ENCODE measurements at regions of chr2 and their contacts with region 1.

Region 1: DNA sequence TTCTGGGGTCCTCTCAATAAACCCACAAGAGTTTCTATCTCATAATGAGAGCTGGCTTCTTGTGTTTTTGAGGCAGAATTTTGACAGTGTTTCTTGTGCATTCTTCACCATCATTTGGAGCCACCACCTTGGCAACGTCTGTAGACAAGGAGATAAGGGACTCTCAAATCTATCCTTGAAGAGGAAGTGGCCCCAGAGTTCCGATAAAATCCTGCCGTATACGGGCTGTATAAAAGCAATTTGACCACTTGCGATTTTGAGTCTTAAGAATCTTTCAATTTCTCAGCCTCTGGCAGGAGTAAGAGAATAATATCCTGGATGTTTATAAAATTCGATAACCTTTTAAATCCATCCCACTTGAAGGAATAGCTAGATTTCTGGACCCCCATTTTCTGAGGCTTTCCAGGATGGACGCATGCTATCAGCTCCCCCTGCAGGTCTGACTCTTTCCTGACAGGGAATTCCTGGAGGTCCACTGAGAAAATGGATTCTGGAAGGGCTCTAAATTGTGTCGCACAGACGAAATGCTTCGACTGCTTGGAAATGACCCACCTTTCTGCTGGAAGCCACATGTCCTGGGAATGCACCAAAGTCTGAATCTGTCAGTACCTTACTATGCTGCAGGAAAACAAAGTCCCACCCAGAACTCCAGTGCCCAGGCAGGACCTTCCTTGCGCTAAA is 54.1 kb downstream of the E2F6 start:
- DNase-seq: peak; percentile 51 to 66 (median 57)
- ATAC-seq: peak; percentile 77
- H3K4me3 ChIP-seq: peak overlapping the region; percentile 5; the same call in 1 of the 2 replicates
- H3K27ac ChIP-seq: no peak overlapping the region
- H3K4me1 ChIP-seq: peaks cover 3 to 17% of the 10 kb centered on the region in 2 experiments; a peak in 4 of 5 replicates
- H3K27me3 ChIP-seq: no peaks in the 10 kb centered on the region
- CTCF ChIP-seq: peak; percentile 72 to 84 (median 79)
- EP300 ChIP-seq: 0 out of 2 replicates have a peak, but pooled peaks have one; percentile 25
- POLR2A ChIP-seq: no peak
- RAD21 ChIP-seq: peak; percentile 83 to 90

Region 2: GRCh38 chr2:11124503-11125068 is 287.3 kb before region 1 on chr2:
- CTCF ChIA-PET with region 1: no interaction called
- POLR2A ChIA-PET with region 1: no interaction called
- in situ Hi-C with region 1: loop called (anchors 25 kb)
- intact Hi-C with region 1: no loop called
- DNase-seq: peak; percentile 70 to 86 (median 80)
- ATAC-seq: peak; percentile 86
- H3K4me3 ChIP-seq: no peak overlapping the region
- H3K27ac ChIP-seq: no peak overlapping the region
- H3K4me1 ChIP-seq: peaks cover 10 to 16% of the 10 kb centered on the region in 2 experiments; a peak in 3 of 5 replicates
- H3K27me3 ChIP-seq: peaks cover 3 to 60% of the 10 kb centered on the region in 2 experiments; a peak in 3 of 5 replicates
- CTCF ChIP-seq: peak; percentile 88 to 90 (median 90)
- EP300 ChIP-seq: no peak
- POLR2A ChIP-seq: no peak
- RAD21 ChIP-seq: peak; percentile 87 to 93

Region 3: DNA sequence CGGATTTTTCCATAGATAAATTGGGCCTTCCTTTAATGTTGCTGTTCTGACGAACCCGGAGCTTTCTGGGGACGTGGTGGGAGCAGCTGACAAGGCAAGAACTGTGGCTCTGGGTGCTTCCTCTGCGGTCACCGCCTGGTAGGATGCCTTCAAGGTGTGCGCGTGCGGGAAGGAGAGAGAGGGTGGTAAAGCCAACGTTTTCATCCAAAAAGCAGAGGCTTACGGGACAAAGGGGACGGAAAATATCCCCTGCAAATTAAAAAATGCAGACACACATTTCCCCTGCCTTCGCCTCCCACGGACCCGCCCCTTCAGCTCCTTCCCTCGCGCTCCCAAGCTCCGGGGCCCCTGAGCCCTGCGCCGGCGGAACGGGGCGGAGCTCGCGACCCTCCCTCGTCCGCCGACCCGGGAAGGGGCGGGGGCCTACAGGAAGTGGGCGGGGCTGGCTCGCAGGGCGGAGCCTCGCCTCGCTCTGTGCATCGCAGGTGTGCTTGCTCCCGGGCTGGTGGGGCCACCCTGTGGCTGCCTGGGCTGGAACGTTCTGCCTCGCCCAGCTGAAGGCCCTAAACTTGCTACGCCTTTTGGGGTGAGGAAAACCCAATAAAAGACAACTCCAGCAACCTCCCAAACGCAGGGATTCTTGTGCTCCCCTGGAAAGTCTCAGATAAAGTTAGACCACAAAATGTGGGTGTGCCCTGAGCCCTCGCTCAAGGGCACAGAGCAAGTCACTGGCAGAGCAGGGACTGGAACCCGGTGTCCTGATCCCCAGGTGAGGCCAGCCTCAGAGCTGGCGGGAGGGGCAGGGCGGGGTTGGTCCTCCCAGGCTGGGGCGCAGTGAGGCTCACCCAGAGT is 282.1 kb before region 1 on chr2:
- CTCF ChIA-PET with region 1: interaction called, 20 read pairs
- POLR2A ChIA-PET with region 1: interaction called, 4 read pairs
- in situ Hi-C with region 1: loop called (anchors 25 kb)
- intact Hi-C with region 1: loop called (anchors 1 kb)
- DNase-seq: peak; percentile 85 to 94 (median 90)
- ATAC-seq: peak; percentile 94
- H3K4me3 ChIP-seq: peak overlapping the region; percentile 48
- H3K27ac ChIP-seq: no peak overlapping the region
- H3K4me1 ChIP-seq: peaks cover 16 to 24% of the 10 kb centered on the region in 2 experiments; a peak in 4 of 5 replicates
- H3K27me3 ChIP-seq: peaks cover 3 to 29% of the 10 kb centered on the region in 2 experiments; a peak in 3 of 5 replicates
- CTCF ChIP-seq: peak; percentile 56 to 74 (median 71)
- EP300 ChIP-seq: no peak
- POLR2A ChIP-seq: no peak
- RAD21 ChIP-seq: peak; percentile 66 to 78

Region 4: DNA sequence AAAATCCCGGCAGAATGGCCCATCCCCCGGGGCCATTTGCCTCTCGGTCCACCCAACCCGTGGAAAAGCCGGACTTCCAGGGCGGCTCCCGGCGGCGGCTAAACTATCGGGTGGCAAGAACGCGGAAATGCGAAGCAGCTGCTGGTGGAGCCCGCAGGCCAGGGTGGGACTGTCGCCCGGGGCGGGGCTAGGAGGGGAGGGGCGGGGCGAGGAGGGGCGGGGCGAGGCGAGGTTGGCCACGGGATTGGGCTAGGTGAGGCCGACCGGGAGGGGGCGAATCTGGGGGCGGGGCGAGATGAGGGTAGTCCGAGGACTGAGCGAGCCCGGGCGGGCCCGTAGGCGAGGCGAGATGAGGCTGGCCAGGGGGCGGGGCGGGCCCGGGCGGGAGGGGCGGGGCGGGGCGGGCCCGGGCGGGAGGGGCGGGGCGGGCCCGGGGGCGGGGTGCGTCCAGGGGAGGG is 257.0 kb before region 1 on chr2:
- CTCF ChIA-PET with region 1: no interaction called
- POLR2A ChIA-PET with region 1: interaction called, 3 read pairs
- in situ Hi-C with region 1: no loop called
- intact Hi-C with region 1: loop called (anchors 5 kb)
- DNase-seq: peak; percentile 96 to 100 (median 100)
- ATAC-seq: peak; percentile 91
- H3K4me3 ChIP-seq: peak overlapping the region; percentile 71
- H3K27ac ChIP-seq: peak overlapping the region; percentile 74
- H3K4me1 ChIP-seq: peaks cover 13 to 41% of the 10 kb centered on the region in 2 experiments; a peak in 4 of 5 replicates
- H3K27me3 ChIP-seq: no peaks in the 10 kb centered on the region
- CTCF ChIP-seq: no peak
- EP300 ChIP-seq: no peak
- POLR2A ChIP-seq: peak; percentile 72
- RAD21 ChIP-seq: no peak

Region 5: DNA sequence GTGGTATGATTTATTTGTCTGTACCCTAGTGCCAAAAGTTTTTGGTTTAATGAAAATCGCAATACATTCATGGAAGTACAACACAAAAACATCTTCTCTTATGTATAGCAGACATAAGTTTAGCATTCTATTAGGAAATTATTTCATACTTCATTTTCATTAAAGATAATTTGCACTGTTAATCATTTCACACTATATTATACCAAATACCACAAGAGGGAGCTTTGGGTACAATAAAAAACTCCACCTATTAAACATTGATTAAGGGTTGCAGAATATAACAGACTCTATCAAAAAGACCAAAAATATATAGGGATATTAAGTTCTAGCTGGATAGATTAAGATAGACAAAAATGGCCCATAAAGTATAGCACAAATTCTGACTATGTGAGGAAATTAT is 177.6 kb before region 1 on chr2:
- CTCF ChIA-PET with region 1: interaction called, 23 read pairs
- POLR2A ChIA-PET with region 1: no interaction called
- in situ Hi-C with region 1: loop called (anchors 25 kb)
- intact Hi-C with region 1: loop called (anchors 1 kb)
- DNase-seq: no peak
- ATAC-seq: no peak
- H3K4me3 ChIP-seq: no peak overlapping the region
- H3K27ac ChIP-seq: no peak overlapping the region
- H3K4me1 ChIP-seq: no peaks in the 10 kb centered on the region; a peak in 1 of 5 replicates
- H3K27me3 ChIP-seq: no peaks in the 10 kb centered on the region
- CTCF ChIP-seq: peak in 2 of 3 experiments; percentile 8 to 57; a peak in 3 of 6 replicates
- EP300 ChIP-seq: no peak
- POLR2A ChIP-seq: no peak
- RAD21 ChIP-seq: peak; percentile 64 to 75

Region 6: DNA sequence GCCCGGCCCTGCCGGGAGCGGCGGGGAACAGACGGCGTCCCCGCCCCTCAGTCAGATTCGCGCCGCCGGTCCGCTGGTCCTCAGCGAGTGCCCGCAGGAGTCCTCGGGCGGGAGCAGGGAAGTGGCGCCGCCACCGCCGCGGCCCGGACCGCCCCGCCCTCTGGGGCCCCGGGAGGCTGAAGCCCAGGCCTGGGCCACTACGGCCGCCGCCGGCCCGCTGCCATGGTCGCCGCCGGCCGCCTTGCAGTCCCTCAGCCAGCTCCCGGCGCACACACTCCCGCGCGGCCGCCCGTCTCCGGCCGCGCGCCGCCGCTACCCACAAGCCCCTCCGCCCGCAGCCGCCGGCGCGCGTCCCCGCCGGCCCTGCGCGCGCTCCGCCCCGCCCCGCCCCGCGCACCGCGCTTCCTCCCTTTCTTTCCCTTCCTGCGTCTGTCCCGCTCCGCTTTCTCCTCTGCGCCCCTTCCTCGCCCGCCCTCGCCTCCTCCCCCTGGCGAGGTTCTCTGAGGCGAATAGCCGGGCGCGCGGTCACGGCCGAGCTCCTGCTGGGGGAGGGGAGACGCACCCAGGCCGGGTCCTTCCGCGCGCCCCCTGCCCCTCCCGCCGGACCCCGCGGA is 67.5 kb before region 1 on chr2 and contains the start of gene ROCK2:
- CTCF ChIA-PET with region 1: no interaction called
- POLR2A ChIA-PET with region 1: no interaction called
- in situ Hi-C with region 1: no loop called
- intact Hi-C with region 1: loop called (anchors 5 kb)
- DNase-seq: peak; percentile 87 to 91 (median 90)
- ATAC-seq: peak; percentile 72
- H3K4me3 ChIP-seq: peak within 1 kb of the TSS; percentile 87
- H3K27ac ChIP-seq: peak within 1 kb of the TSS; percentile 90
- H3K4me1 ChIP-seq: peaks cover 14 to 22% of the 10 kb centered on the region in 2 experiments
- H3K27me3 ChIP-seq: no peaks in the 10 kb centered on the region
- CTCF ChIP-seq: no peak
- EP300 ChIP-seq: no peak
- POLR2A ChIP-seq: peak; percentile 70
- RAD21 ChIP-seq: no peak
- polyA plus RNA-seq, gene ROCK2: 4.9 to 6.0 TPM

Region 7: DNA sequence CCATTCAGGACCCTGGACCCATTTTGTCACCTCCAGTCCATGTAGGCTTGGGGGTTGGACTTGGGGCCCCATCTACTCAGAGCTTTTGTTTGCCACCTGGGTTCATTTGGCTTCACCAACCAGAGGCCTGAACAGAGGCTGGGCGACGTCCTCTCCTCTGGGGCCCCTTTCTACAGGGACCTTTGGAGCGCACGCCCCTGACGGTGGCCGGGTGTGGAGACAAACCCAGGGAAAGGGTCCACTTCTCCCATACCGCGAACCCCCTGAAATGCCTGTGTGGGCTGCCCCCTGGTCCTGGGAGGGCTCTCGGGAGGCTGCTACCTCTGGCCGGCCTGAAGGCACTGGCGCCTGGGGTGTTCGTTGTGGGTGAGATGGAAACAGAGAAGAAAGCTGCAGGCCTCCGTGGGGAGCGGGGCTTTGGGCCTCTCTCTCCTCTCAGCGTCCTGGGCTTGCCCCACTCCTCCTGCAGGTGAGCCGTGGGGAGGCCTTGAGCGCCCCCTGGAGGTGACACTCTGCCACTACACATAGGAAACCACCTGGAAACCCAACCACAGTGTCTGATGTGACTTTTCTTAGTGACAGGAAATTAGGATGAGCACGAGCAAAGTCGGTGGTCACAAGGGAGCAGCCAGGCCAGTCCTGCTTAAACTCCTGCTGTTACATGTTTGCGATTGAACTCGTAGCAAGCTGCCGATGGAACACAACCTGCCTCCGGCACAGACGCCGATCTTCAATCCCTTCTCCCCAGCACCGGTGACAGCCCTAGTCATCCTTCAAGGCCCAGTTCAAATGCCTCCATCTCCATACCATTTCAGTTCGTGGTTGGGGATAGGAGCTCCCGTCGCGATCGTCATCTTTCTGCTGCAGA is 270.0 kb after region 1 on chr2:
- CTCF ChIA-PET with region 1: no interaction called
- POLR2A ChIA-PET with region 1: no interaction called
- in situ Hi-C with region 1: no loop called
- intact Hi-C with region 1: no loop called
- DNase-seq: peak; percentile 71 to 91 (median 89)
- ATAC-seq: peak; percentile 93
- H3K4me3 ChIP-seq: no peak overlapping the region
- H3K27ac ChIP-seq: no peak overlapping the region
- H3K4me1 ChIP-seq: peaks cover 0 to 7% of the 10 kb centered on the region in 2 experiments; a peak in 2 of 5 replicates
- H3K27me3 ChIP-seq: peaks cover 26 to 80% of the 10 kb centered on the region in 2 experiments; a peak in 3 of 5 replicates
- CTCF ChIP-seq: peak; percentile 92 to 97 (median 92)
- EP300 ChIP-seq: no peak
- POLR2A ChIP-seq: no peak
- RAD21 ChIP-seq: peak; percentile 73 to 87

Measured in K562 (cell line).